Psoas muscle (tissue), 8 donors: ENCODE measurements at regions of chr1 and their contacts with region 1.

Region 1: DNA sequence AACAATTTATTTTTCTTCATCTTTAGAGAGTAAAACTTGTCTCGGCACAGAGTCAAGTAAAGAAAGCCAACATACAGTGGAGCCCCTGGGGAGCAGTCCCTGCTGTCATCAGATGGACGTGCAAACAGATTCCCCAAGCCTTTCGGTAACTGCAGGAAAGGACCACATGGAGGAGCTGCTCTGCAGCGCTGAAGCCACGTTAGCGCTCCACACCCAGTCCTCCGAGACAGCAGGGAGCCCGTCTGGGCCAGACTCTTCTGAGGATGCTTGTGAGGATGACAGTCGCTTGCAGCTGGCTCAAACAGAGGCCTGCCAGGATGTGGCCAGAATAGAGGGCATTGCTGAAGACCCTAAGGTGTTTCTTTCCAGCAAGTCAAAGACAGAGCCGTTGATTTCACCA is 77.1 kb upstream of the SCCPDH start:
- DNase-seq: peak; percentile 48 to 77
- ATAC-seq: peak; percentile 88 to 94 (median 92)
- H3K4me3 ChIP-seq: peak overlapping the region; percentile 16
- H3K27ac ChIP-seq: peak overlapping the region; percentile 56
- H3K4me1 ChIP-seq: peaks cover 27% of the 10 kb centered on the region
- H3K27me3 ChIP-seq: no peaks in the 10 kb centered on the region
- CTCF ChIP-seq: peak; percentile 62

Region 2: DNA sequence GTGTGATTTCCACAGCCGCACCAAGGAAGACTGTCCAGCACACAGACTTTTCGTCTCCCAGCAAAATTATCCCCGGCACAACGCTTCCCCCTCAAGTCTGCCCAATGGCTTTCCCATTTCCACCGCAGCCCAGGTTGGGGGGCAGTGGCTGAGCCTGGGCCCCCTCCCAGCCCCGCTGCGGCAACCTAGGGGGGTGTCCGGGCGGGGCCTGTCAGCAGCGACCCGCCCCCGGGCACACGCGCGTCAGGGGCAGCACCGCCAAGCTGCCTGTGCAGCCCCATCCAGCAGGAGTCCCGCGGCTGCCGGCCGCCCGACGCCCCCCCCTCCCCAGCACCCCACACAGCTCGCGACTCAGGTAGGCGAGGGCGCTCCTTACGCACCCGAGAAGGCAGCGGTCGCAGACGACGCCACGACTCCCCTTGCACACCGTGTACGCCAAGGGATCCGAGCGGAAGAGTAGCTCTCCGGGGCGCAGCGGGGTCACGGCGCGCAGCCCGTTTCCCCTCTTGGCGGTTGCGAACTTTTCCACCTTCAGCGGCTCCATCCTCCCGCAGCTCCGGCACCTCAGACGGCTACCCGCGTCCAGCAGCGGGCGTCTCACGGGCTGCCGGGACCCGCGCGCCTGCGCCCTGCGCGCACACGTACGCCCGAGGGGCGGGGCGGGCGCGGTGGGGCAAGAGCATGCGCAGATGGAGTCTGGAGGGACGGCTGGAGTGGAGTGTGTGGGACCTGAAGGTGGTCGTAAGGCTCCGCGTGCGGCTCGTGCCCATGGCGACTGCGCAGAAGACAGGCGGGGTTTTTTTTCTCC is 140.2 kb before region 1 on chr1 and contains the start of gene SMYD3:
- intact Hi-C with region 1: no loop called
- DNase-seq: peak; percentile 80 to 86
- ATAC-seq: peak; percentile 98 to 100 (median 98)
- H3K4me3 ChIP-seq: peak within 1 kb of the TSS; percentile 89
- H3K27ac ChIP-seq: peak within 1 kb of the TSS; percentile 71
- H3K4me1 ChIP-seq: peaks cover 4% of the 10 kb centered on the region
- H3K27me3 ChIP-seq: no peaks in the 10 kb centered on the region
- CTCF ChIP-seq: peak; percentile 9
- total RNA-seq, gene SMYD3: 4.9 to 6.4 (median 5.8) TPM

Region 3: DNA sequence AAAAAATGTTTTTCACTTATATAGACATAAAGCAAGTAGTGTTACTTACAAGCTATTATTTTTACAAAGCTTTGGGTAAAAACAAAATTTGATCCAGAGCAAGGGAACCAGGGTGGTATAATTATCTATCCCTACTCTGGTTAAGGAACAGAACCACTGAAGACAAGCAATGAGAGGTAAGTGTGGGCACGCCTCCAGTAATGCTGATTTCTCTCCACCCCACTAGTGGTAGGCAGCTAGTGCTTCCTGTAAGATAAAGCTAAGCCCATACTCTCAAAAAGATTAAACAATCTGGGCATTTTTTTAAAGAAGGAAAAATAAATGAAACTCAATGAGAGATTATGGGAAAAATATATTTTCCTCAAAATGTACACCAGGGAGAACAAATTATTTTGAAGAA is 103.1 kb before region 1 on chr1:
- intact Hi-C with region 1: no loop called
- DNase-seq: no peak
- ATAC-seq: no peak
- H3K4me3 ChIP-seq: no peak overlapping the region
- H3K27ac ChIP-seq: no peak overlapping the region
- H3K4me1 ChIP-seq: no peaks in the 10 kb centered on the region
- H3K27me3 ChIP-seq: no peaks in the 10 kb centered on the region
- CTCF ChIP-seq: no peak

Region 4: GRCh38 chr1:246597340-246597739 is 49.8 kb before region 1 on chr1:
- intact Hi-C with region 1: no loop called
- DNase-seq: no peak
- ATAC-seq: peak in 2 of 4 donors; percentile 49 to 50
- H3K4me3 ChIP-seq: no peak overlapping the region
- H3K27ac ChIP-seq: no peak overlapping the region
- H3K4me1 ChIP-seq: peaks cover 28% of the 10 kb centered on the region
- H3K27me3 ChIP-seq: no peaks in the 10 kb centered on the region
- CTCF ChIP-seq: no peak

Region 5: DNA sequence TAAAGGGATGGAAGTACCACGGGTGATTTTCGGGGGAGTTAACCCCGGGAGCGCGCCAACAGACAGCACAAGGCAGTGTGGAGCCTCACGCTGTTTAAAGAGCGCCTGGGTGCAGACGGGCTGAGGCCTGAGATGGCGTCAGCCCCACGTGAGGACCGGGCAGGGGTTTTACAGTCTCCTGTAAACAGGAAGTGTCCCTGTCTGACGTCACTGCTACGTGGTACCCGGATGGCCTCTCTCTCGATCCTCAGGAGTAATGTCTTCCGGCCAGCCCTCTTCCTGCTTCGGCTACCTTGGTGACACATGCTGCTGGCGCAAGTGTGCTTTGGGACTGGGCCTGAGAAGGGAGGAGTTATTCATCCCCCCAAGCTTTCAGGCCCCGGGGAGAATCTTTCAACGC is 39.7 kb before region 1 on chr1:
- intact Hi-C with region 1: no loop called
- DNase-seq: no peak
- ATAC-seq: peak in 1 of 4 donors; percentile 15
- H3K4me3 ChIP-seq: no peak overlapping the region
- H3K27ac ChIP-seq: peak overlapping the region; percentile 53
- H3K4me1 ChIP-seq: peaks cover 37% of the 10 kb centered on the region
- H3K27me3 ChIP-seq: no peaks in the 10 kb centered on the region
- CTCF ChIP-seq: no peak

Region 6: DNA sequence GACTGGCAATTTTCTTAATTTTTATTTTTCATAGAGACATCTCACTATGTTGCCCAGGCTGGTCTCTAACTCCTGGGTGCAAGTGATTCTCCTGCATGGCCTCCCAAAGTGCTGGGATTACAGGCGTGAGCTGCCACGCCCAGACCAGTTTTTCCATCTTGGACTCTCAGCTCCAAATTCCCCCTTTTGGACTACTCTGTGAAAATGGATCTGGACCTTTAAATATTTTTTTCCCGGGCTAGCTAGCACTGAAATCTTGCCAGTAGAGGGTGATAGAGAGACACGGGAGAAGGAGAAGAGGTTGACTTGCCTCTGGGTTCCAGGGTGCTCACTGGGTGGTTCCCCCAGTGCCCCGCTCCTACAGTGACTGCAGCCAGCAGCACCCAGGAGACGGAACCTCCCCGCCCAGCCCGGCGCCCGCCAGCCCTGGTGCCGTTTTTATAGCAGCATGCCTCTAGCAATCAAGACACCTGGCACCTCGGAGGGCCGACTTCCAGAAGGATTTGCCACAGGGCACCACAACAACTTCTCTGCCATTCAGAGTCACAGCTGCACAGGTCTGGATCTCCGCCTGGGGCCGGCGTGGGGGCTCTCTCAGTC is 42.4 kb after region 1 on chr1:
- intact Hi-C with region 1: loop called in 1 of 2 experiments (anchors 5 kb)
- DNase-seq: peak; percentile 58 to 78
- ATAC-seq: peak; percentile 86 to 91 (median 90)
- H3K4me3 ChIP-seq: peak overlapping the region; percentile 66
- H3K27ac ChIP-seq: peak overlapping the region; percentile 81
- H3K4me1 ChIP-seq: peaks cover 14% of the 10 kb centered on the region
- H3K27me3 ChIP-seq: no peaks in the 10 kb centered on the region
- CTCF ChIP-seq: peak; percentile 67

Region 7: GRCh38 chr1:246699095-246699735 is 52.1 kb after region 1 on chr1:
- intact Hi-C with region 1: loop called (anchors 1 to 5 kb)
- DNase-seq: peak; percentile 82 to 93
- ATAC-seq: peak; percentile 98 to 100 (median 99)
- H3K4me3 ChIP-seq: peak overlapping the region; percentile 53
- H3K27ac ChIP-seq: peak overlapping the region; percentile 86
- H3K4me1 ChIP-seq: peaks cover 6% of the 10 kb centered on the region
- H3K27me3 ChIP-seq: no peaks in the 10 kb centered on the region
- CTCF ChIP-seq: peak; percentile 85

Region 8: GRCh38 chr1:246753670-246754535 is 106.8 kb after region 1 on chr1:
- intact Hi-C with region 1: loop called in 1 of 2 experiments (anchors 5 kb)
- DNase-seq: peak; percentile 55 to 67
- ATAC-seq: peak; percentile 80 to 96 (median 86)
- H3K4me3 ChIP-seq: no peak overlapping the region
- H3K27ac ChIP-seq: no peak overlapping the region
- H3K4me1 ChIP-seq: peaks cover 5% of the 10 kb centered on the region
- H3K27me3 ChIP-seq: no peaks in the 10 kb centered on the region
- CTCF ChIP-seq: peak; percentile 69